ENCODE measurements at regions of chr2 and their contacts with region 1.

Region 1: DNA sequence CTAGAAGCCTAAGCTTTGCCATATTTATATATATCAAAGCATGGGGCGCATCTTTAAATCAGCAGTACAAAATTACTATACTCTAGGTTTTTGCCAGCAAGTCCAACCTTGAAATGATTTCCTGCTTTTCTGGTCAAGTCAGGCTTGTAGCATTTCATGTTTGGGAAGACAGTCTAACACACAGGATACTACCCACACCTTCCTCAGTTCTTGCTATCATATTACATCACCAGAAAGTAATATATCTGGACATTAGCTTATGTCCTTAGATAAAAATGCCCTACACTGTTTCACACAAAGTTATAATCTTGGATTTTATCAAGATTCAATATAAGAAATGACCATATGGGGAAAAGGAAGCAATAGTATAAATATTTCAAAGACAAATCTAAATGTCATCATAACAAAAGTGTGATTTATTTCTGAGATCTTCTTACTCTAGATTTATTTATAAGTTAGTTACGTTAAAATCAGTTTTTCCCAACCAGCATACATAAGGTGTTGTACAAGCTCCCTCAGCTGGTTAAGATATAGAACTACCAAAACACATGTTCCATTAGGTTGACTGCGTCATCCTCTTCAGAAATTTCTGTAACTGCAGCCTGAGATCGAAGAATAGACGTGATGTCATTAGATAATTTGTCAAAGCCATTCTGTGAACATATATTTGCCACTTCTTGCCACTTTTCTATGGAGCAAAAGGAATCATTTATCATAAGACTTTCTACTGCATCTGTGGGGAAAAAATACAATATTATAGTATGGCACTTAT is 56.7 kb downstream of the CLHC1 start:
- DNase-seq: peak; percentile 59
- H3K4me3 Mint-ChIP-seq: no peak overlapping the region
- H3K27ac Mint-ChIP-seq: no peak overlapping the region
- H3K4me1 Mint-ChIP-seq: no peaks in the 10 kb centered on the region
- H3K27me3 Mint-ChIP-seq: no peaks in the 10 kb centered on the region

Region 2: GRCh38 chr2:54657664-54658083 is 517.8 kb before region 1 on chr2:
- intact Hi-C with region 1: loop called (anchors 10 kb)
- DNase-seq: peak; percentile 78
- H3K4me3 Mint-ChIP-seq: no peak overlapping the region
- H3K27ac Mint-ChIP-seq: peak overlapping the region; percentile 76
- H3K4me1 Mint-ChIP-seq: peaks cover 19% of the 10 kb centered on the region
- H3K27me3 Mint-ChIP-seq: no peaks in the 10 kb centered on the region

Region 3: GRCh38 chr2:54838585-54839035 is 336.8 kb before region 1 on chr2:
- intact Hi-C with region 1: loop called (anchors 10 kb)
- DNase-seq: peak; percentile 86
- H3K4me3 Mint-ChIP-seq: no peak overlapping the region
- H3K27ac Mint-ChIP-seq: no peak overlapping the region
- H3K4me1 Mint-ChIP-seq: no peaks in the 10 kb centered on the region
- H3K27me3 Mint-ChIP-seq: no peaks in the 10 kb centered on the region

Region 4: GRCh38 chr2:54899576-54900200 is 275.8 kb before region 1 on chr2:
- intact Hi-C with region 1: loop called (anchors 5 kb)
- DNase-seq: no peak
- H3K4me3 Mint-ChIP-seq: no peak overlapping the region
- H3K27ac Mint-ChIP-seq: no peak overlapping the region
- H3K4me1 Mint-ChIP-seq: peaks cover 28% of the 10 kb centered on the region
- H3K27me3 Mint-ChIP-seq: no peaks in the 10 kb centered on the region

Region 5: GRCh38 chr2:55014962-55015939 is 160.2 kb before region 1 on chr2:
- intact Hi-C with region 1: loop called (anchors 1 kb)
- DNase-seq: peak; percentile 81
- H3K4me3 Mint-ChIP-seq: no peak overlapping the region
- H3K27ac Mint-ChIP-seq: no peak overlapping the region
- H3K4me1 Mint-ChIP-seq: peaks cover 19% of the 10 kb centered on the region
- H3K27me3 Mint-ChIP-seq: no peaks in the 10 kb centered on the region

Region 6: GRCh38 chr2:56068746-56069145 is 893.3 kb after region 1 on chr2:
- intact Hi-C with region 1: no loop called
- DNase-seq: no peak
- H3K4me3 Mint-ChIP-seq: no peak overlapping the region
- H3K27ac Mint-ChIP-seq: no peak overlapping the region
- H3K4me1 Mint-ChIP-seq: no peaks in the 10 kb centered on the region
- H3K27me3 Mint-ChIP-seq: no peaks in the 10 kb centered on the region

Measured in activated CD4-positive, alpha-beta T cell treated with anti-CD3 and anti-CD28 coated beads, Interleukin-2, amount 10 ng/mL, durations not matched to agents 24 days and 14 days (primary cell).